ENCODE measurements at regions of chr11 and their contacts with region 1.

Region 1: GRCh38 chr11:119741369-119742262 is 12.6 kb upstream of the NECTIN1 start:
- DNase-seq: peak; percentile 37 to 75 (median 62)
- H3K4me3 ChIP-seq: peak overlapping the region in 56 of 59 donors; percentile 7 to 63 (median 40)
- H3K27ac ChIP-seq: peak overlapping the region; percentile 37 to 90 (median 82)
- H3K27me3 ChIP-seq: peaks cover 0 to 12% (median 0%) of the 10 kb centered on the region in 45 donors
- CTCF ChIP-seq: peak; percentile 13 to 91 (median 78)

Region 2: DNA sequence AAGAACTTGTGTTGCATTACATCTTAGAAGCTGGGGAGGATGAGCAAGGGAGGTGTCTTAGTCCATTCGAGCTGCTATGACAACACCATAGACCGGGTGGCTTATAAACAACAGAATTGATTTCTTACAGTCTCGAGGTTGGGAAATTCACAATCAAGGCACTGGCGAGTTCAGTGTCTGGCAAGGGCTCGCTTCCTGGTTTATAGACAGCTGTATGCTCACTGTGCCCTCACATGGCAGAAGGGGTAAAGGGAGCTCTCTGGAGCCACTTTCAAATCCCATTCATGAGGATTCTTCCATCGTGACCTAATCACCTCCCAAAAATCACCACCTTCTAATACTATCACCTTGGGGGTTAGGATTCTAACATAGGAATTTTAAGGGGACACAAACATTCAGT is 137.4 kb after region 1 on chr11:
- intact Hi-C with region 1: loop called in 1 of 2 experiments (anchors 5 kb)
- DNase-seq: peak in 3 of 10 donors; percentile 34 to 49 (median 35)
- H3K4me3 ChIP-seq: no peak overlapping the region
- H3K27ac ChIP-seq: peak overlapping the region in 4 of 59 donors; percentile 11 to 46 (median 24)
- H3K27me3 ChIP-seq: no peaks in the 10 kb centered on the region
- CTCF ChIP-seq: peak in 29 of 56 donors; percentile 10 to 59 (median 26)

Region 3: DNA sequence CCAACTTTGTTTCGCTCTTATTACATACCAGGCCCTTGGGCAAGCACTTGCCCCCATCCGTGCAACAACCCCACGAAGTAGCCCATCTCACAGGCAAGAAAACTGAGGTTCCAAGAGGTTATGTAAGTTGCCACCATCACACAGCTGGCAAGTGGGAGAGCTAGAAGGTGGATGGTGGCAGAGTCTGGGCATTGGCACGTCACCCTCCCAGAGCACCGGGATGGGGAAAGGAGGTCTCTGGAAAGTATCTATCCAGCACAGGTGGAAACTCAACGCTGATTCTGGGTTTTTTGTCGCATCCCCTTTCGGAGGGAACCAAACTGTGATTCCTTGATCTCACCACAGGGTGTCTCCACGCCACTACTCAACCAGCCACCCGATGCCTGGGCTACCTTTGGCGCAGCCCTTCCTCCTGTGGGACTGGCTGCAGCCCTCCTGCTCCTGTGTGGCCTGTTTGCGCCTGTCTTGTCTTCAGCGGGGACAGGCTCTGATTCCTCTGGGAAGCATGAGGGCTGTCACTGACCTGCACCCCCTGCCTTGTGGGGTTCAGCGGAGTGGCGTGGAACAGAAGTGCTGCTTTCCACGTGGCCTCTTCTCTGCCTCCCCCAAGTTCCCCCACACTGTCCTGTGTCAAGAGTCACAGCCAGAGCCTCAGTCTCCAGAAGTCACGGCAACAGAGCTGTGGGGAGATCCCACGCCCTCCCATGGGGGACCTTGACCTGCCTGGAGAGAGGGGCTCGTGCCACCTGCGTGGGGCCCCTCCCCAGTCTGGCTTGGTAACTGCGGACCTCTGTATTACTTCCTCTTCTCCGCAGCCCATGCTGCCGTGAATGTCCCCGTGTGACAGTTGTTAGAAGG is 430.7 kb after region 1 on chr11:
- intact Hi-C with region 1: loop called in 1 of 2 experiments (anchors 5 kb)
- DNase-seq: peak in 9 of 10 donors; percentile 55 to 80 (median 72)
- H3K4me3 ChIP-seq: peak overlapping the region in 3 of 59 donors; percentile 11 to 26 (median 11)
- H3K27ac ChIP-seq: no peak overlapping the region
- H3K27me3 ChIP-seq: peaks cover 0 to 5% (median 0%) of the 10 kb centered on the region in 45 donors
- CTCF ChIP-seq: peak; percentile 69 to 98 (median 92)